H1 (cell line): ENCODE measurements at regions of chr1 and their contacts with region 1.

Region 1: DNA sequence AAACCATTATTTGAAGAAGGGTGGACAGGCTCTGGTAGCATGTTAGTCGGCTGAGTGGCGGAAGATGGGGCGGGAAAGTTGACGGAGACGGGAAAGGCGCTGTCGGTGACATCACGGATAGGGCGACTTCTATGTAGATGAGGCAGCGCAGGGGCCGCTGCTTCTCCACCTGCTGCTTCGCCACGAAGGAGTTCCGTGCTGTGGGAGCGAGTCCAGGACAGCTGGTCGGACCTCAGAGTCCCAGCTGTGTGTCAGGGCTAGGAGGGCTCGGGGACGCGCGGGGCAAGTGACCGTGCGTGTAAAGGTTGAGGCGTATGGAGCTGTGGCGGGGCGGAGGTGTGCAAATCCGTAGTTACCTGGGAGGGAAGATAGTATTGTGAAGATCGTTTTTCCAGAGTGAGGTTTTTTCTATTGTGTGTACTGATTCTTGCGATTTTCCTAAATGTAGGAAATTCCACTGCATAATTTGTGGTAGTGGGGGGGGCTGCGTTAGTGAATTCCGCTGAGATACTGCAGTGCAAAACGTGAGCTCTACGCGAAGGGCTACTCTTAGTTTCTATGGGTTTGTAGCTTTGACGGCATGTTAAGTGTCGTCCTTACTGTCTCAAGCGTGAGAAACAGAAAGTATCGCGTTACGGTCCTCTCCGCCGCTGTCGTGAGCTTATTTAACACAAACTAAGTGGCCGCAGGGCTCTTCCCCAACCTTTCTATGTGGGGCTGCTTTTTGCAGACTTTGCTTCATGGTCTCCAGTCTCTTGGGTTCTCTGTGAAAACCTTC is 111.2 kb upstream of the NBPF11 start:
- DNase-seq: peak; percentile 86 to 93
- H3K4me3 ChIP-seq: peak overlapping the region; percentile 52 to 76 (median 64)
- H3K27ac ChIP-seq: peak overlapping the region; percentile 100
- H3K4me1 ChIP-seq: no peaks in the 10 kb centered on the region; a peak in 1 of 7 replicates
- H3K27me3 ChIP-seq: no peaks in the 10 kb centered on the region
- CTCF ChIP-seq: peak in 1 of 3 experiments; percentile 3; a peak in 1 of 4 replicates
- EP300 ChIP-seq: peak in 1 of 2 experiments; percentile 84; a peak in 1 of 3 replicates
- POLR2A ChIP-seq: peak; percentile 100
- RAD21 ChIP-seq: 0 out of 4 replicates have a peak, but pooled peaks have one; percentile 2 to 11

Region 2: GRCh38 chr1:148307583-148308190 is 44.4 kb after region 1 on chr1:
- CTCF ChIA-PET with region 1: no interaction called
- POLR2A ChIA-PET with region 1: interaction called, 15 read pairs
- DNase-seq: no peak
- H3K4me3 ChIP-seq: no peak overlapping the region
- H3K27ac ChIP-seq: no peak overlapping the region
- H3K4me1 ChIP-seq: no peaks in the 10 kb centered on the region
- H3K27me3 ChIP-seq: peaks cover 9 to 39% (median 24%) of the 10 kb centered on the region in 4 experiments
- CTCF ChIP-seq: no peak
- EP300 ChIP-seq: no peak
- POLR2A ChIP-seq: no peak
- RAD21 ChIP-seq: no peak

Region 3: DNA sequence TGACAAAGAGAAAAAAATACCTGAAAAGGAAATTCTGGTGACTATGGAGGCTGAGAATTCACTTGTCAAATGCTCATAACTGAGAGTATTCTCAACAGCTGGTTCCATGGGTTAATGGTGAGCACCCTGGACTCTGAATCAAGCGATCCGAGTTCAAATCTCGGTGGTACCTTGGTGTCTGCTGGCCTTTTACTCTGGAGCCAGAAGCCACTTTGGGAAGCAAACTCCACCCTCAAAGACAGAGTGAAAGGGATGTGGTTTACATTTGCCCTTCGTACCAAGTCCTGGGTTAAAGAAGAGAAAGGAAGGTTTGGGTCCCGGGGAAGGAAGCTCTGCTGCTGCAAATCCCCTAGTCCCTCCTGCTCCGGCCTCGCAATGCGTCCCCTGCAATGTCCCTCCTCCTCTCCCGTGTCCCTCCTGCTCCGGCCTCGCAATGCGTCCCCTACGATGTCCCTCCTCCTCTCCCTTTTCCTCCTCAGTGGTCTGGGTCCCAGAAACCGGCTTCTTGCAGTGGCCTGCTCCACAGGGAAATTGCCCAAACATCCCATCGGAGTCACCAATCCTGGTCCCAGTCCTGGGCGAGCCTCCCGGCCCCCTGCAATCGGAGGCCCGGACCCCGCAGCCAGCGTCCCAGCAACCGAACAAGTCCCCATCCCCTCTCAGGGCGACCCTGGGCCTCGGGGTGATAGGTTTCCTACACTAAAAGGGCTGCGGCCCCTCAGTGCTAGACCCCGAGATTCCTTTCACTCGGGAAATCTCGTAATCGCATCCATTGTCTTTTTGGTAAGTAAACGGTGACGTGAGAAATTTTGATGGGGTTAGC is 90.4 kb after region 1 on chr1:
- CTCF ChIA-PET with region 1: no interaction called
- POLR2A ChIA-PET with region 1: interaction called, 20 read pairs
- DNase-seq: no peak
- H3K4me3 ChIP-seq: peak overlapping the region; percentile 63 to 83 (median 76)
- H3K27ac ChIP-seq: no peak overlapping the region; the same call in 1 of the 2 replicates
- H3K4me1 ChIP-seq: peaks cover 0 to 4% (median 1%) of the 10 kb centered on the region in 4 experiments; a peak in 2 of 7 replicates
- H3K27me3 ChIP-seq: peaks cover 9 to 29% (median 21%) of the 10 kb centered on the region in 4 experiments
- CTCF ChIP-seq: no peak
- EP300 ChIP-seq: no peak
- POLR2A ChIP-seq: peak in 1 of 2 experiments; percentile 47; a peak in 1 of 3 replicates
- RAD21 ChIP-seq: no peak